H1 (cell line): ENCODE measurements at regions of chr14 and their contacts with region 1.

Region 1: GRCh38 chr14:70816525-70816924 is 7.2 kb upstream of the MAP3K9 start:
- DNase-seq: peak in 1 of 2 experiments; percentile 49
- H3K4me3 ChIP-seq: no peak overlapping the region
- H3K27ac ChIP-seq: no peak overlapping the region
- H3K4me1 ChIP-seq: peaks cover 0 to 14% (median 7%) of the 10 kb centered on the region in 4 experiments; a peak in 5 of 7 replicates
- H3K27me3 ChIP-seq: peaks cover 0 to 3% (median under 1%) of the 10 kb centered on the region in 4 experiments; a peak in 4 of 7 replicates
- CTCF ChIP-seq: no peak
- EP300 ChIP-seq: no peak
- POLR2A ChIP-seq: no peak
- RAD21 ChIP-seq: no peak

Region 2: DNA sequence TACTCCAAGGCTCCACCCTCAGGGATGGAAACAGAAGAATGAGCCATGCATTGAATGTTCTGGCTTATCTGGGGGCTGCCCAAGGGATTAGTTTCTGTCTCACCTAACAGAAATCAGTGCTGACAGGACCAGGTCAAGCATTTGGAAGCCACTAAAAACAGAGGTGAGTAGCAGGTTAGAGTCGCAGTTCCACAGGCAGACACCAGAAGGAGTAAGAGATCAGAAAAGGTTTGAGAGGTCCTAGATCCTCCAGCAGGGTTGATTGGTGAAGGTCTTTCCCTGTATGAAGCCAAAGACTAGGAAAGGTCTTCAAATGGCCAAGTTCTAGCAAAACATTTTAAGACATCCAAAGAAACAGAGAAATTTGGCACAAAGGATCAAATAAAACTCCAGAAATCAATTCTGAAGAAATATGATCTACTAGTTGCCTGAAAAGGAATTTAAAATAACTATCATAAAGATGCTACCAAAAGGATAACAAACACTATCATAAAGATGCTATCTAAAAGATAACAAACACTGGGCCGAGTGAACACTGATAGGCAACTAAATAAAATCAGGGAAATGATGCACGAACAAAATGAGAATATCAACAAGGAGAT is 194.3 kb before region 1 on chr14:
- CTCF ChIA-PET with region 1: interaction called, 21 read pairs
- POLR2A ChIA-PET with region 1: no interaction called
- DNase-seq: peak in 1 of 2 experiments; percentile 75
- H3K4me3 ChIP-seq: no peak overlapping the region
- H3K27ac ChIP-seq: no peak overlapping the region
- H3K4me1 ChIP-seq: no peaks in the 10 kb centered on the region
- H3K27me3 ChIP-seq: no peaks in the 10 kb centered on the region
- CTCF ChIP-seq: peak; percentile 31 to 95 (median 94)
- EP300 ChIP-seq: no peak
- POLR2A ChIP-seq: no peak
- RAD21 ChIP-seq: peak; percentile 96 to 97

Region 3: GRCh38 chr14:70721542-70721941 is 95.0 kb before region 1 on chr14:
- CTCF ChIA-PET with region 1: interaction called, 13 read pairs
- POLR2A ChIA-PET with region 1: no interaction called
- DNase-seq: no peak
- H3K4me3 ChIP-seq: no peak overlapping the region
- H3K27ac ChIP-seq: no peak overlapping the region
- H3K4me1 ChIP-seq: 0 out of 7 replicates have a peak, but pooled peaks cover 0 to 2% (median 0%) of the 10 kb centered on the region in 4 experiments
- H3K27me3 ChIP-seq: no peaks in the 10 kb centered on the region
- CTCF ChIP-seq: no peak
- EP300 ChIP-seq: no peak
- POLR2A ChIP-seq: no peak
- RAD21 ChIP-seq: no peak

Region 4: GRCh38 chr14:70789361-70789760 is 27.2 kb before region 1 on chr14:
- CTCF ChIA-PET with region 1: interaction called, 15 read pairs
- POLR2A ChIA-PET with region 1: no interaction called
- DNase-seq: no peak
- H3K4me3 ChIP-seq: no peak overlapping the region
- H3K27ac ChIP-seq: no peak overlapping the region
- H3K4me1 ChIP-seq: no peaks in the 10 kb centered on the region
- H3K27me3 ChIP-seq: no peaks in the 10 kb centered on the region
- CTCF ChIP-seq: no peak
- EP300 ChIP-seq: no peak
- POLR2A ChIP-seq: no peak
- RAD21 ChIP-seq: no peak